T-cell (primary cell): ENCODE measurements at regions of chr17 and their contacts with region 1.

Region 1: GRCh38 chr17:82022981-82023374 is at the start of gene LRRC45:
- DNase-seq: peak; percentile 98 to 100 (median 100)
- ATAC-seq: peak; percentile 92 to 94 (median 93)
- H3K4me3 ChIP-seq: peak within 1 kb of the TSS; percentile 71 to 76
- H3K4me3 Mint-ChIP-seq: peak within 1 kb of the TSS; percentile 72 to 81 (median 80)
- H3K27ac ChIP-seq: no peak within 1 kb of the TSS
- H3K27ac Mint-ChIP-seq: peak within 1 kb of the TSS in 1 of 2 donors; percentile 48
- H3K4me1 ChIP-seq: peaks cover 12 to 42% of the 10 kb centered on the region in 2 experiments
- H3K4me1 Mint-ChIP-seq: peaks cover 14 to 31% (median 19%) of the 10 kb centered on the region in 3 donors
- H3K27me3 ChIP-seq: peaks cover 0 to 6% of the 10 kb centered on the region in 2 experiments
- H3K27me3 Mint-ChIP-seq: no peaks in the 10 kb centered on the region
- total RNA-seq, gene LRRC45: 13.3 to 28.5 (median 22.3) TPM

Region 2: DNA sequence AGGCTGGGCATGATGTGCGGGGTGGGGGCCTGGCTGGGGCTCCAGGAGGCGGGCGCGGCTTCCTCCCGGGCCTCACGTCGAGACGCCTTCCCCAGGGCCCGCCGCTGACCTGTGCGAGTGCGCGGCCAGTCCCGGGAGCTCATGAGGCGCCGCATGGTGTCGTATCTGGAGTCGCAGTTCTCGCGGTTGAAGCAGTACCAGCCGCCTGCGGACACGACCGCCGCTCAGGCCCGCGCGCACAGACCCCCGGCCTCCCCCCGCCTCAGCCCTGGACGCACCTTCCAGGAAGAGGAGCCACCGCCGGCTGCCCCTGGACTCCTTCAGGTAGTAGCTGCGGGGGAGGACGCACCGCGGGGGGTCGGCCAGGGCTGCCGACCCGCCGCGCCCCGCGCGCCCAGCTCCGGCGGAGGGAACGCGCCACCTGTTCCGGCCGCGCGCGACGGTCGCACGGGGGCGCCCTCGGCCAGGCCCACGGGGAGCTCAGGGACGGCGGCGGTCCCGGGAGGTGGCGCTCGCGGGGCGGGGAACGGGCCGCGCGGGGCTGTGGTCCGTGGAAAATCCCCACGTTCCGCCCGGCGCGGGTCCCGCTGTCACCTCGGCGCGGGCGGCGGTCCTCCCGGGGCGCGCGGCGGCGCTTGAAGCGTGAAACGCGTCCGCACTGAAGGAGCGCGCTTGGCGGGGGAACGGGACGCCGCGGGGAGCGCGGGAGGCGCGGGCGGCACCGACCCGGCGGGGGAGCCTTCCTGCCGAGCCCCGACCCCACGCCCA is 63.4 kb before region 1 on chr17:
- CTCF ChIA-PET with region 1: interaction called, 4 to 26 read pairs
- POLR2A ChIA-PET with region 1: no interaction called
- DNase-seq: peak; percentile 45 to 95 (median 76)
- ATAC-seq: peak; percentile 93 to 97 (median 95)
- H3K4me3 ChIP-seq: peak overlapping the region; percentile 21 to 38
- H3K4me3 Mint-ChIP-seq: peak overlapping the region in 2 of 3 donors; percentile 59 to 72
- H3K27ac ChIP-seq: no peak overlapping the region
- H3K27ac Mint-ChIP-seq: no peak overlapping the region
- H3K4me1 ChIP-seq: peaks cover 6 to 33% of the 10 kb centered on the region in 2 experiments
- H3K4me1 Mint-ChIP-seq: peaks cover 0 to 11% (median 0%) of the 10 kb centered on the region in 3 donors
- H3K27me3 ChIP-seq: peaks cover 5 to 75% of the 10 kb centered on the region in 2 experiments
- H3K27me3 Mint-ChIP-seq: peaks cover 0 to 37% of the 10 kb centered on the region in 2 donors

Region 3: GRCh38 chr17:82037113-82037888 is 14.3 kb after region 1 on chr17 and contains the start of gene DCXR:
- CTCF ChIA-PET with region 1: interaction called in 1 of 2 experiments, 17 read pairs
- POLR2A ChIA-PET with region 1: interaction called in 1 of 2 experiments, 4 read pairs
- DNase-seq: peak; percentile 87 to 97 (median 92)
- ATAC-seq: peak; percentile 91 to 94 (median 94)
- H3K4me3 ChIP-seq: peak within 1 kb of the TSS; percentile 59 to 78
- H3K4me3 Mint-ChIP-seq: peak within 1 kb of the TSS; percentile 82 to 88 (median 87)
- H3K27ac ChIP-seq: peak within 1 kb of the TSS; percentile 55
- H3K27ac Mint-ChIP-seq: peak within 1 kb of the TSS; percentile 90 to 93
- H3K4me1 ChIP-seq: peaks cover 8 to 26% of the 10 kb centered on the region in 2 experiments
- H3K4me1 Mint-ChIP-seq: peaks cover 16 to 31% (median 29%) of the 10 kb centered on the region in 3 donors
- H3K27me3 ChIP-seq: peaks cover 0 to 4% of the 10 kb centered on the region in 2 experiments
- H3K27me3 Mint-ChIP-seq: no peaks in the 10 kb centered on the region
- total RNA-seq, gene DCXR: 70.4 to 111 (median 96.1) TPM

Region 4: GRCh38 chr17:82051776-82052637 is 29.0 kb after region 1 on chr17 and contains the starts of genes GPS1 and RFNG:
- CTCF ChIA-PET with region 1: no interaction called
- POLR2A ChIA-PET with region 1: no interaction called
- DNase-seq: peak; percentile 59 to 87 (median 78)
- ATAC-seq: peak; percentile 91 to 95 (median 92)
- H3K4me3 ChIP-seq: peak within 1 kb of the TSS; percentile 75 to 81
- H3K4me3 Mint-ChIP-seq: peak within 1 kb of the TSS; percentile 82 to 87 (median 86)
- H3K27ac ChIP-seq: no peak within 1 kb of the TSS
- H3K27ac Mint-ChIP-seq: peak within 1 kb of the TSS; percentile 85 to 88
- H3K4me1 ChIP-seq: peaks cover 9 to 45% of the 10 kb centered on the region in 2 experiments
- H3K4me1 Mint-ChIP-seq: peaks cover 5 to 26% (median 18%) of the 10 kb centered on the region in 3 donors
- H3K27me3 ChIP-seq: no peaks in the 10 kb centered on the region
- H3K27me3 Mint-ChIP-seq: no peaks in the 10 kb centered on the region
- total RNA-seq, gene GPS1: 75.3 to 117 (median 98.0) TPM
- total RNA-seq, gene RFNG: 31.5 to 38.6 (median 35.2) TPM